ENCODE measurements at regions of chr10 and their contacts with region 1.

Region 1: GRCh38 chr10:50577681-50578350 is 45.9 kb downstream of the SGMS1 start:
- DNase-seq: peak; percentile 61 to 88 (median 78)
- H3K4me3 ChIP-seq: peak overlapping the region in 2 of 7 experiments; percentile 8
- H3K27ac ChIP-seq: peak overlapping the region; percentile 4 to 73
- H3K4me1 ChIP-seq: peaks cover 12 to 36% (median 19%) of the 10 kb centered on the region in 4 experiments
- H3K27me3 ChIP-seq: no peaks in the 10 kb centered on the region

Region 2: GRCh38 chr10:50326757-50327701 is 250.8 kb before region 1 on chr10:
- CTCF ChIA-PET with region 1: no interaction called
- POLR2A ChIA-PET with region 1: no interaction called
- DNase-seq: peak; percentile 67 to 82 (median 76)
- H3K4me3 ChIP-seq: peak overlapping the region in 6 of 7 experiments; percentile 25 to 68 (median 58)
- H3K27ac ChIP-seq: peak overlapping the region; percentile 26 to 92
- H3K4me1 ChIP-seq: peaks cover 4 to 46% (median 24%) of the 10 kb centered on the region in 4 experiments
- H3K27me3 ChIP-seq: no peaks in the 10 kb centered on the region

Region 3: DNA sequence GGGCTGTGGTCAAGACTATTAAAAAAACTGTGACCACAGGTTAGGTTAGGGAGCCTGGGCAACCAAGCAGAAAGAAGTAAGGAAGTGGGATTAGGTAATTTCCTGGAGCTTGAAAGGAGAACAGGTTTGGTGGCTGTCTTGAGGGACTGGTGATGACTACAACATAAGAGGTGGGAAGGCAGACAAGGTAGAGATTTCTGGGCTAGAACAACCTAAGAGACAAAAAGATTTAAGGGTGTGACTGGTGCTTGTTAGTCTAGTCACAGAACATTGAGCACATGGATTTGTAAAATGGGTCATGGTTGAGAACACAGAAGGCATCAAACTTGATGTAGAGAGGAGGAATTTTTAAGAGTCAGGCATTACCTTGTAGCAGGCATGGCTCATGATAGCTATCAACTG is 202.8 kb before region 1 on chr10:
- CTCF ChIA-PET with region 1: no interaction called
- POLR2A ChIA-PET with region 1: no interaction called
- DNase-seq: peak; percentile 16 to 41 (median 38)
- H3K4me3 ChIP-seq: no peak overlapping the region
- H3K27ac ChIP-seq: no peak overlapping the region
- H3K4me1 ChIP-seq: peaks cover 5 to 22% (median 16%) of the 10 kb centered on the region in 4 experiments
- H3K27me3 ChIP-seq: no peaks in the 10 kb centered on the region

Region 4: GRCh38 chr10:50561816-50562215 is 16.0 kb before region 1 on chr10:
- CTCF ChIA-PET with region 1: interaction called, 20 read pairs
- POLR2A ChIA-PET with region 1: no interaction called
- DNase-seq: peak in 2 of 3 donors; percentile 25 to 34
- H3K4me3 ChIP-seq: no peak overlapping the region
- H3K27ac ChIP-seq: no peak overlapping the region
- H3K4me1 ChIP-seq: no peaks in the 10 kb centered on the region
- H3K27me3 ChIP-seq: no peaks in the 10 kb centered on the region

Region 5: GRCh38 chr10:50641631-50642030 is 63.8 kb after region 1 on chr10:
- CTCF ChIA-PET with region 1: no interaction called
- POLR2A ChIA-PET with region 1: no interaction called
- DNase-seq: no peak
- H3K4me3 ChIP-seq: no peak overlapping the region
- H3K27ac ChIP-seq: no peak overlapping the region
- H3K4me1 ChIP-seq: peaks cover 2 to 4% (median 3%) of the 10 kb centered on the region in 4 experiments
- H3K27me3 ChIP-seq: no peaks in the 10 kb centered on the region